Activated CD4-positive, alpha-beta T cell treated with anti-CD3 and anti-CD28 coated beads for 36 hours (primary cell): ENCODE measurements at regions of chr16 and their contacts with region 1.

Region 1: GRCh38 chr16:57810197-57811031 is 8.1 kb upstream of the KIFC3 start:
- DNase-seq: peak; percentile 87
- ATAC-seq: peak; percentile 97
- H3K4me3 Mint-ChIP-seq: no peak overlapping the region
- H3K27ac Mint-ChIP-seq: peak overlapping the region; percentile 27
- H3K4me1 Mint-ChIP-seq: peaks cover 23% of the 10 kb centered on the region
- H3K27me3 Mint-ChIP-seq: peaks cover 15% of the 10 kb centered on the region

Region 2: GRCh38 chr16:57600048-57600835 is 210.2 kb before region 1 on chr16:
- CTCF ChIA-PET with region 1: interaction called, 4 read pairs
- POLR2A ChIA-PET with region 1: no interaction called
- intact Hi-C with region 1: loop called in 1 of 2 experiments (anchors 5 kb)
- DNase-seq: peak; percentile 73
- ATAC-seq: peak; percentile 18
- H3K4me3 Mint-ChIP-seq: no peak overlapping the region
- H3K27ac Mint-ChIP-seq: no peak overlapping the region
- H3K4me1 Mint-ChIP-seq: peaks cover 35% of the 10 kb centered on the region
- H3K27me3 Mint-ChIP-seq: no peaks in the 10 kb centered on the region

Region 3: DNA sequence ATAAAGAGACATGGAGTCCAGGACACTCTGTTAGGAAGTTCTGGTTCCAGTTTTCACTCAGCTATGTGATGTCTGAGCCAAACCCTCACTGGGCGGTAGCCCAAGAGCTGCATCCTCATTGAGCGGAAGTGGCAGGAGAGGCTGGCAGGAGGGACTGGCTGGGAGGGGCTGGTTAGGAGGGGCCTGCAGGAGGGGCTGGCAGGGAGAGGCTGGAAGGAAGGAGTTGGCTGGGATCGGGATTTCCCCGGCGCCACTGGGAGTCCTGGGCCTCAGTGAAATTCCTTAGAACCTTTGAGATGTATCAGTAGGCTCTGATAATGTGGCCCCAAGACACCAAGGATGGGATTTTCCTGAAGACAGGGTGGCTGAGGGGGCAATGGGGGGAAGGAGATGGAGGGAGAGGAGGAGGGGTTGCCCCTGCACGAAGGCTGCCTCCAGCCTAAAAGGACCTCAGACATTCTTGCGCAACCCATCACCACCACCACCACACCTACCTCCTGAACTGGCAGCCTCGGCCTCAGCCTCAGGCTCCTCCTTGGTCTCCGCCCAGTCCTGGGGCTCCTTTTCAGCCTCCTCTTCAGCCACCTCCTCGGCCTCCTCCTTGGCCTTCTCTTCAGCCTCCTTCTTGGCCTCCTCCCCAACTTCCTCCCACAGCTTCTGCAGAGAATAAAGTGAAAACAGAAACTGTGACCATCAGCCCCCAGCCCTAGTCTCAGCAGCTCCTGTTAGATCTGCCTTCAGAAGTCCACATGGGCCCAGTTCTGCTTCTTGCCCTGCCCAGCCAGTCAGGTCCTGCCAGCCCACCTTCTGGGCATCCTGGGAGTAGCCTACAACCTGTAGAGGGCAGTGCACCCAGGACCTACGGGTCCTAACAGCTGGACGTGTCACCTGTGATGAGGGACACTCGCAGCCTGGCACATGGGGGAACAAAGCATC is 128.8 kb after region 1 on chr16:
- CTCF ChIA-PET with region 1: no interaction called
- POLR2A ChIA-PET with region 1: no interaction called
- intact Hi-C with region 1: no loop called
- DNase-seq: no peak
- ATAC-seq: no peak
- H3K4me3 Mint-ChIP-seq: no peak overlapping the region
- H3K27ac Mint-ChIP-seq: no peak overlapping the region
- H3K4me1 Mint-ChIP-seq: no peaks in the 10 kb centered on the region
- H3K27me3 Mint-ChIP-seq: no peaks in the 10 kb centered on the region

Region 4: GRCh38 chr16:57984331-57985203 is 174.2 kb after region 1 on chr16:
- CTCF ChIA-PET with region 1: no interaction called
- POLR2A ChIA-PET with region 1: no interaction called
- intact Hi-C with region 1: loop called in 1 of 2 experiments (anchors 1 kb)
- DNase-seq: peak; percentile 97
- ATAC-seq: peak; percentile 100
- H3K4me3 Mint-ChIP-seq: peak overlapping the region; percentile 76
- H3K27ac Mint-ChIP-seq: no peak overlapping the region
- H3K4me1 Mint-ChIP-seq: peaks cover 7% of the 10 kb centered on the region
- H3K27me3 Mint-ChIP-seq: no peaks in the 10 kb centered on the region

Region 5: GRCh38 chr16:58329147-58329546 is 518.7 kb after region 1 on chr16:
- CTCF ChIA-PET with region 1: no interaction called
- POLR2A ChIA-PET with region 1: no interaction called
- intact Hi-C with region 1: no loop called
- DNase-seq: no peak
- ATAC-seq: no peak
- H3K4me3 Mint-ChIP-seq: no peak overlapping the region
- H3K27ac Mint-ChIP-seq: no peak overlapping the region
- H3K4me1 Mint-ChIP-seq: no peaks in the 10 kb centered on the region
- H3K27me3 Mint-ChIP-seq: peaks cover 19% of the 10 kb centered on the region